ENCODE measurements at regions of chr17 and their contacts with region 1.

Region 1: DNA sequence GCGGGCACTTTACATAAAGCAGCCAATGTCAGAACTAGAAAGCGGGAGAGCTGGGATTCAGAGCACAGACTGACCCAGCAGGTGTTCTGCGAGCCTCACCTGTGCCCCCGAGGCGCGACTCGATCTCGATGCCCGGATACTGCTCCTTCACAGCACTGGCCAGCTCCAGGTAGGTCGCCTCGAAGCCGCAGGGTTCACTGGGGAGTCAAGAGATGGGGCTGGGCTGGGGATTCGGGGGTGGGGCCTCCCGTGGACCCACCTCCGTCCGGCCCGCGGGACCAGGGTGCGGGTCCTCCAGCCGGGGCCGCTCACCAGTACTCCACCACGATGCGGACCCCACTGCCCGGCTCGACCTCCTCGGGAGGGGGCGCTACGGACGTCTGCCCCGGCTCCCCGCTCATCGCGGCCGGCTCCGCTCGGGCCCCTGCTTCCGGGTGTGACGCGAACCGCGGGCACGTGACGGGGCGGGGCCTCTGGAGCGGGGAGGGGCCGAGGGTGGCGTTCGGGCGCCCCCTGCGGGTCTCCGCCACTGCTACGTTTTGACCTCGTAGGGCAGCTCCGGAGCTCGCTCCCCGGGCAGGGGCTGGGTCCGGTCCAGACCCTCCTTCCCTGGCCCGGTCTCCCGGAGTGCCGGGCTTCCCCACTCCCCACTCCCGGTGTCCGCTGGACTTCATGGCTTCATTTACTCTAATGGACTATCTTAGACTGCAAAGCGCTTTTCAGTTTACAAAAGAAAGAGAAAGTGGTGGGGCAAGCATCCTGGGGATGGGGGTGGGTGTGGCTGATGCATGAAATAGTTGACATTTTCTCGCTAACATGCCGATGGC is at the start of gene MIEN1:
- DNase-seq: peak; percentile 87 to 99 (median 94)

Region 2: GRCh38 chr17:39687811-39688518 is 42.3 kb before region 1 on chr17 and contains the start of gene PGAP3:
- intact Hi-C with region 1: loop called (anchors 2 kb)
- DNase-seq: peak; percentile 67 to 96 (median 80)

Region 3: DNA sequence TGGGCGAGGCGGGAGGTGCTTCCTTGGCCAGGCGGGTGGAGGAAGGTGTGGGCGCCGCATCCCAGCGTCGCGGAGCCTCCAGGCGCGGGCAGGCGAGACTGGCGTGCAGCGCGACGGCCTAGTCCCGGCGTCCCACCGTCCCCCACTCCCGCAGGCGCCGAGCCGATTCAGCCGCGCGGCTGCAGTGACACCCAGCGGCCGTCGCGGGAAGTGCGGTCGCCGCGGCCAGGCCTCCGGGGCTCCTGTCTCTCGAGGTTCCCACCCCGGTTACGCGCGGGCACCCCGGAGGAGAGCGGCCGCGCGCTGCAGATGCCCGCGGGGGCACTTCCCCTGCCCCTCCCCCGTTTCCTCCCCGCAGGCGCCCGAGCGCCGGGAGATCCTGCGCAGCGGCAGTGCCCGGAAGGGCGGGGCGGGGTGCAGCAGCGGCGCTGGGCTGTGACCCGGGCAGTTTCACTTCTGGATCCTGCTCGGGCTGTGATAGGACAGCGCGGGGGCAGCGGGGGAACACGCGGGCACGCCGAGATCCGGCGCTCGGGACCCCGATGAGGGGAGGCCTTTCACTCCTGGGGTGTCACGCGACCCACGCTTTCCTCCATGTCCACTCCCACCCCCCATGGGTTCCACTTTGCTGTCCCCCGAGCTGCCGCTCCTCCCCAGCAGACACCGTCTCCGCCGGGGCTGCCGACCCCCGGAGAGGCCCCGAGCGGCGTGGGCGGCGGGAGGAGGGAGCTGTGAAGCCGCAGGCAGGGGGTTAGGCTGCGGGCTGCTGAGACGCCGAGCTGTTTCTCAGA is 24.0 kb after region 1 on chr17:
- intact Hi-C with region 1: no loop called
- DNase-seq: peak; percentile 73 to 98 (median 86)

Measured in posterior cingulate gyrus (tissue), 11 donors.